ENCODE measurements at regions of chr4 and their contacts with region 1.

Region 1: GRCh38 chr4:11424000-11424399 is 4.7 kb downstream of the HS3ST1 start:
- DNase-seq: peak; percentile 45
- H3K4me3 ChIP-seq: no peak overlapping the region
- H3K27ac ChIP-seq: no peak overlapping the region
- H3K4me1 ChIP-seq: no peaks in the 10 kb centered on the region
- CTCF ChIP-seq: peak; percentile 77

Region 2: DNA sequence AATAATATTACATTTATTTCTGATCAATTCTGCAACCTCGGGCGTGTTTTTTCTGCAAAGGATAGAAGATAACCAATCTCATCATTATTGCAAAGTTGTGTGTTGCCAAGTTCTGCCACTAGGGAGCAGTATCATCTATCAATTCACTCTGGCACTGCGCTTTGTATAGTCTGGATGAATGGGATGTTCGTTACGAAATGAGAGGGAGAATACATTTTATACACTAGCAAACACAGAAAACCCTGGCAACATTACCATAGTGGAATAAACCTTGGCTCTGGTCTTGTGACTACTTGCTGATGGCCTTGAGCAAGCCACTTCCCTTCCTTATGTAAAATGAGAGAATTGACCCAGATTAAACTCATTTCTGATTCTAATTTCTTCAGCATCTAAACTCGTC is 869.3 kb before region 1 on chr4:
- CTCF ChIA-PET with region 1: no interaction called
- POLR2A ChIA-PET with region 1: no interaction called
- intact Hi-C with region 1: loop called (anchors 2 kb)
- DNase-seq: peak; percentile 54
- H3K4me3 ChIP-seq: no peak overlapping the region
- H3K27ac ChIP-seq: no peak overlapping the region
- H3K4me1 ChIP-seq: no peaks in the 10 kb centered on the region
- CTCF ChIP-seq: peak; percentile 95

Measured in OCI-LY7 (cell line).